ENCODE measurements at regions of chr3 and their contacts with region 1.

Region 1: GRCh38 chr3:152268555-152269425 is at the start of gene MBNL1:
- DNase-seq: peak; percentile 93
- H3K4me3 Mint-ChIP-seq: peak within 1 kb of the TSS; percentile 84
- H3K27ac Mint-ChIP-seq: peak within 1 kb of the TSS; percentile 84
- H3K4me1 Mint-ChIP-seq: peaks cover 52% of the 10 kb centered on the region
- H3K27me3 Mint-ChIP-seq: no peaks in the 10 kb centered on the region
- total RNA-seq, gene MBNL1: 290 to 302 TPM

Region 2: GRCh38 chr3:152258448-152259393 is 10.1 kb before region 1 on chr3:
- CTCF ChIA-PET with region 1: no interaction called
- POLR2A ChIA-PET with region 1: interaction called, 130 read pairs
- intact Hi-C with region 1: loop called (anchors 1 kb)
- DNase-seq: peak; percentile 86
- H3K4me3 Mint-ChIP-seq: peak overlapping the region; percentile 70
- H3K27ac Mint-ChIP-seq: peak overlapping the region; percentile 95
- H3K4me1 Mint-ChIP-seq: peaks cover 83% of the 10 kb centered on the region
- H3K27me3 Mint-ChIP-seq: no peaks in the 10 kb centered on the region

Region 3: GRCh38 chr3:152737021-152737908 is 468.5 kb after region 1 on chr3:
- CTCF ChIA-PET with region 1: no interaction called
- POLR2A ChIA-PET with region 1: no interaction called
- intact Hi-C with region 1: no loop called
- DNase-seq: no peak
- H3K4me3 Mint-ChIP-seq: no peak overlapping the region
- H3K27ac Mint-ChIP-seq: no peak overlapping the region
- H3K4me1 Mint-ChIP-seq: no peaks in the 10 kb centered on the region
- H3K27me3 Mint-ChIP-seq: peaks cover 1% of the 10 kb centered on the region